ENCODE measurements at regions of chr19 and their contacts with region 1.

Region 1: DNA sequence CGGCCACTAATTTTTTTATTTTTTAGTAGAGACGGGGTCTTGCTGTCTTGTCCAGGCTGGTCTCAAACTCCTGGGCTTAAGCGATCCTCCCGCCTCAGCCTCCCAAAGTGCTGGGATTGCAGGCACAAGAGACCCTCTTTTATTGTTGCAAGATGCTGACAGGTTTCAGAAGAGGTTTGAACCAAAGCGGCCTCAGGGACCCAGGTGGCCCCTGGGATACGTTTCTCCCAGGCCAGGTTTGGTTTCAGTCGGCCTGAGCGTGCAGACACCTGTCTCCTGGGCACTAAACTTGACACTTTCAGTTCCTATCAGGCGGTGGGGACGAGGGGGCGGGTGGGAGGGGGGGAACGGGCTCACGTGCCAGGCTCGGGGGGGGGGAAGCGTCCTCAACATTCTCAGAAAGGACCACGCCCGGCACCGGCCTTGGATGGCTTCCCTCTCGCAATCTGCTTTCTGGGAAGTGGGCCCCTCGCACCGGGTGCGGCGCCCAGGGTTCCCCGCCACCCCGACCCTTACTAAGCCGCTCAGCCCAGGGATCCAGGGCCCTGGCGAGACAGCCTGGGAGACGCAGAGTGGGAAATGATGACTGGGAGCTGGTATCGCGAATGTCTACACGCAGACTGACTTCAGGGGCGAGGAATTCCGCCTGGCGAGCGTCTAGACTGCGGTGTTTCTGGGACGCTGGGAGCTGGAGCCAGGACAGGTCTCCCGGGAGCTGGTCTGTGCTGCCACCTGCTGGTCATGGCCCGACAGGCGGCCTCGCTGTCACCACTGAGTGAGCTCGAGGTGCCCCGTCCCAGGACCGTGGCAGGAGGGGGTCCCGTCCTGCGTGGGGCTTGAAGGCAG is 91.6 kb downstream of the GNG7 start:
- DNase-seq: peak; percentile 60 to 85
- H3K4me3 ChIP-seq: no peak overlapping the region; the same call in 1 of the 2 replicates
- H3K27ac ChIP-seq: no peak overlapping the region
- H3K4me1 ChIP-seq: no peaks in the 10 kb centered on the region
- H3K27me3 ChIP-seq: no peaks in the 10 kb centered on the region
- CTCF ChIP-seq: peak; percentile 86

Region 2: GRCh38 chr19:1929021-1929742 is 681.7 kb before region 1 on chr19:
- CTCF ChIA-PET with region 1: interaction called, 9 read pairs
- POLR2A ChIA-PET with region 1: no interaction called
- intact Hi-C with region 1: loop called (anchors 10 kb)
- DNase-seq: peak in 1 of 2 experiments; percentile 71
- H3K4me3 ChIP-seq: peak overlapping the region; percentile 46; the same call in 1 of the 2 replicates
- H3K27ac ChIP-seq: no peak overlapping the region
- H3K4me1 ChIP-seq: no peaks in the 10 kb centered on the region
- H3K27me3 ChIP-seq: no peaks in the 10 kb centered on the region
- CTCF ChIP-seq: peak; percentile 76

Region 3: DNA sequence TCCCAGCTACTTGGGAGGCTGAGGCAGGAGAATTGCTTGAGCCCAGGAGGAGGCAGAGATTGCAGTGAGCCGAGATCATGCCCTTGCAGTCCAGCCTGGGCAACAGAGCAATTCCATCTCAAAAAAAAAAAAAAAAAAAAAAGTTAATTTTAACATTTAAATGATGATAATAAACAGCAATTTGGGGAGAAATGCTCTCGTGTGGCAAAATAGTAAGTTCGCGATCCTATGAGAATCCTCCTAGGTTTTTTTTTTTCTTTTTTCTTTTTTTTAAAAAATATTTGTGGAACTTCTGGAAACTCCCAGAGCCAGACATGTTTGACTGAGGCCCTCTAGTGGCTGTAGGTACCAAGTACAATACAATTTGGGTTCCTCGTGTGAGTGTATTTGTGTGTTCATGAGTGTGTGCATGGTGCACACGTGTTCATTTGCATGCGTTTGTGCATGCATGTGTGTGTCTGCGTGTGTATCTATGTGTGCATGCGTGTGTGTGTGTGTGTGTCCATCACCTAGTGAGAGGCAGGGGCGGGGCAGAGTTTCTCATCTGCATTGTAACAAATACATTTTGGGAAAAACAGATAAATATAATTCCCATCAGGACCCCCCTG is 219.6 kb before region 1 on chr19:
- CTCF ChIA-PET with region 1: no interaction called
- POLR2A ChIA-PET with region 1: no interaction called
- intact Hi-C with region 1: loop called (anchors 5 kb)
- DNase-seq: peak in 1 of 2 experiments; percentile 60
- H3K4me3 ChIP-seq: no peak overlapping the region
- H3K27ac ChIP-seq: no peak overlapping the region
- H3K4me1 ChIP-seq: peaks cover 3% of the 10 kb centered on the region; the same call in 1 of the 2 replicates
- H3K27me3 ChIP-seq: no peaks in the 10 kb centered on the region
- CTCF ChIP-seq: peak; percentile 76

Region 4: GRCh38 chr19:2750808-2751443 is 140.1 kb after region 1 on chr19:
- CTCF ChIA-PET with region 1: no interaction called
- POLR2A ChIA-PET with region 1: no interaction called
- intact Hi-C with region 1: no loop called
- DNase-seq: no peak
- H3K4me3 ChIP-seq: no peak overlapping the region
- H3K27ac ChIP-seq: no peak overlapping the region
- H3K4me1 ChIP-seq: no peaks in the 10 kb centered on the region
- H3K27me3 ChIP-seq: peaks cover 6% of the 10 kb centered on the region
- CTCF ChIP-seq: no peak

Measured in PC-9 (cell line).